Natural killer cell (primary cell): ENCODE measurements at regions of chr18 and their contacts with region 1.

Region 1: GRCh38 chr18:53375621-53376020 is 848.8 kb downstream of the MBD2 start:
- DNase-seq: no peak
- ATAC-seq: no peak
- H3K4me3 ChIP-seq: no peak overlapping the region
- H3K4me3 Mint-ChIP-seq: no peak overlapping the region
- H3K27ac ChIP-seq: no peak overlapping the region
- H3K27ac Mint-ChIP-seq: no peak overlapping the region
- H3K4me1 ChIP-seq: no peaks in the 10 kb centered on the region
- H3K4me1 Mint-ChIP-seq: no peaks in the 10 kb centered on the region
- H3K27me3 ChIP-seq: no peaks in the 10 kb centered on the region
- H3K27me3 Mint-ChIP-seq: no peaks in the 10 kb centered on the region
- CTCF ChIP-seq: no peak

Region 2: GRCh38 chr18:53360501-53361443 is 14.8 kb before region 1 on chr18:
- intact Hi-C with region 1: no loop called
- DNase-seq: no peak
- ATAC-seq: no peak
- H3K4me3 ChIP-seq: no peak overlapping the region
- H3K4me3 Mint-ChIP-seq: no peak overlapping the region
- H3K27ac ChIP-seq: no peak overlapping the region
- H3K27ac Mint-ChIP-seq: no peak overlapping the region
- H3K4me1 ChIP-seq: no peaks in the 10 kb centered on the region
- H3K4me1 Mint-ChIP-seq: no peaks in the 10 kb centered on the region
- H3K27me3 ChIP-seq: no peaks in the 10 kb centered on the region
- H3K27me3 Mint-ChIP-seq: no peaks in the 10 kb centered on the region
- CTCF ChIP-seq: no peak

Region 3: GRCh38 chr18:53441761-53442414 is 66.3 kb after region 1 on chr18:
- intact Hi-C with region 1: loop called (anchors 5 kb)
- DNase-seq: no peak
- ATAC-seq: no peak
- H3K4me3 ChIP-seq: no peak overlapping the region
- H3K4me3 Mint-ChIP-seq: no peak overlapping the region
- H3K27ac ChIP-seq: no peak overlapping the region
- H3K27ac Mint-ChIP-seq: no peak overlapping the region
- H3K4me1 ChIP-seq: no peaks in the 10 kb centered on the region
- H3K4me1 Mint-ChIP-seq: no peaks in the 10 kb centered on the region
- H3K27me3 ChIP-seq: no peaks in the 10 kb centered on the region
- H3K27me3 Mint-ChIP-seq: no peaks in the 10 kb centered on the region
- CTCF ChIP-seq: no peak